Right ventricle myocardium superior (tissue), 1 donor: ENCODE measurements at regions of chr4 and their contacts with region 1.

Region 1: GRCh38 chr4:2418650-2419571 is at the start of gene CFAP99:
- DNase-seq: peak; percentile 99
- ATAC-seq: peak; percentile 98
- total RNA-seq, gene CFAP99: not detected

Region 2: DNA sequence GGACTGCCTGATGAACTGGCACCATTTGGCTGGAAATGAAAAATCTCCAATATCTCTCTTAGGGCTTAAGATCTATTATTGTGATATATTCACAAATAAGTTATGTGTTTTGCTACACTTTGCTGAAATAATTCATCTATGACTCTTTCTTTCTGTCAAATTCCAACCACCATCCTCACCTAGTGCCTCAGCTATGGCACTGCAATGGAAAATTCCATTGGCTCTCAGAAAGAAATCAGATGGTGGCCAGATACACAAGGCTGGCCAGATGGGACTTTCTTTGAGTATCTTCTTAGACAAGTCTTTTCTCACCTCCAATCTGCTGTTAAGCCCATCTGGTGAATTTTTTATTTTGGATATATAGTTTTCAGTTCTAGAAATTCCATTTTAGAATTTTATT is 331.7 kb before region 1 on chr4:
- intact Hi-C with region 1: no loop called
- DNase-seq: no peak
- ATAC-seq: no peak

Region 3: DNA sequence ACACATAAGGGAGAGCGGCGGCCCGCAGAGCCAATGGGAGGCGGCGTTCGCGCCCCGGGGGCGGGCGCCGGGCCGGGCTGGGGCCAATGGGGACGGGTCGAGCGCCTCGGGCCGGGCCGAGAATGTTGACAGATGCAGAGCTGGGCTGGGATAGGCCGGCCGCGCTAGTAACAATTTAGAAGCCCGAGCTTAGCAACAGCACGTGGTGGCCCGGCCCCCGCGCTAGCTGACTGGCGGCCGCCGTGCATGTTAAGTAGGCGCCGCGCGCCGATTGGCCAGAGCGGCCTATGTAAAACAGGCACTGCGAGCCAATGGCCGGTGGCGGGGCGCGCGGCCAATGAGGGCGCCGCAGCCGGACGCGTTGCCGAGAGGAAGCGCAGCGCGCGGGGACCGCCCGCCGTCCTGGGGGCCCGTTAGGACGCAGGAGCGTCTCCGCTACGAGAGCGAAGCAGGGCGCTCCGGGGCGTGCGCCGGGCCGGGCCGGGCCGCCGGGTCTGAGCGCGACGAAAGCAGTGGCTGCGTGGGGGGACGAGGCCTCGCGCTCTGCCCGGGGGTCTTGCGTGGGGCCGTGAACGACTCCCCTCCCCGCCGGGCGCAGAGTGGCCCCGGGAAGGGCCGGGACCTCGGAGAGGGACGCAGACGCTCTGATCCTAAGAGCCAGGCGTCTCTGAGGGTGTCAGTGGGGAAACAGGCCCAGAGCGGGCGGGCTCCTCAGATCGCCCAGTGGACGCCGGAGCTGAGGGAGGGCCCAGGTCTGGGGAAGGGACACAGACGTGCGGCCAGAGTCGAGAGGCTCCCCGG is 156.6 kb before region 1 on chr4:
- intact Hi-C with region 1: loop called (anchors 10 kb)
- DNase-seq: peak; percentile 100
- ATAC-seq: peak; percentile 91

Region 4: GRCh38 chr4:2290974-2291704 is 127.8 kb before region 1 on chr4:
- intact Hi-C with region 1: no loop called
- DNase-seq: peak; percentile 34
- ATAC-seq: no peak